ENCODE measurements at regions of chr19 and their contacts with region 1.

Region 1: DNA sequence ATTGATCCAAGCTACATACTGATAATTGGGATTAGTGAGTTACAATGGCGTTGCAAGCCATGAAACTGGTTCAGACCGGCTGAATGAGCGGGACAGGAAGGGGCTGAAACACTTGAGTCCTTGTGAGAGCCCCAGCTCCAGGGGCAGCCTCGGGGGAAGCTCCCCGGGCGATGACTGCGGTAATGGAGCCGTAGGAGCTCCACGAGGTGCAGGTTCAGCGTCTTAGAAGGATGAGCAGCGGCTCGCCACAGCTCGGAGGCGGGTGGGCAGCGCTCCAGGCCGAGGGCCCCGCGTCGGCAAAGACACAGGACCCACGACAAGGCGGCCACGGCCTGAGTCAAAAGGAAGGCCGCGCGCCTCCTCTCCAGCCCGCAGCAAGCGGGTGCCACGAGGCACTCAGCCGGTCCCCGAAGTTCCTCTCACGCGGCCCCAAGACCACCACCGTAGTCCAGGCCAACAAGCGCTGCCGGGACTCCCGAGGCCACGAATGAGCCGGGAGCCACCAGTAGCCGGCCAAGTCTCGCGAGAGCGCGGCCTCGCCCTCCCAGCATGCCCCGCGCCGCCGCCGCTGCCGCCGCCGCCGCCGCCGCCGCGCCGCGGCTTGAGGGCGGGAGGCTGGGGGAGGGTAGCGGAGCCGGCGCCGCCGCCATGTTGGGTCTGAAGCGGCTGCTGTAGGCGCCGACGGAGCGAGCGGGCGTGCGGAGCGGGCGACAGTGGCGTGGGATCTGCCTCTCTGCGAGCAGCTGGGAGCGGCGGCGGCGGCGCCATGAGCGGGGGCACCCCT is at the start of gene LSM14A:
- DNase-seq: peak; percentile 72
- ATAC-seq: peak; percentile 78
- H3K4me3 ChIP-seq: peak within 1 kb of the TSS; percentile 95
- H3K27ac ChIP-seq: peak within 1 kb of the TSS; percentile 81
- H3K4me1 ChIP-seq: peaks cover 30% of the 10 kb centered on the region
- H3K27me3 ChIP-seq: no peaks in the 10 kb centered on the region
- CTCF ChIP-seq: no peak
- total RNA-seq, gene LSM14A: 67.4 and 88.5 TPM in 2 replicates

Region 2: GRCh38 chr19:34120846-34121639 is 51.0 kb before region 1 on chr19:
- CTCF ChIA-PET with region 1: no interaction called
- POLR2A ChIA-PET with region 1: no interaction called
- intact Hi-C with region 1: no loop called
- DNase-seq: peak; percentile 44
- ATAC-seq: no peak
- H3K4me3 ChIP-seq: no peak overlapping the region
- H3K27ac ChIP-seq: no peak overlapping the region
- H3K4me1 ChIP-seq: no peaks in the 10 kb centered on the region
- H3K27me3 ChIP-seq: no peaks in the 10 kb centered on the region
- CTCF ChIP-seq: peak; percentile 77

Region 3: DNA sequence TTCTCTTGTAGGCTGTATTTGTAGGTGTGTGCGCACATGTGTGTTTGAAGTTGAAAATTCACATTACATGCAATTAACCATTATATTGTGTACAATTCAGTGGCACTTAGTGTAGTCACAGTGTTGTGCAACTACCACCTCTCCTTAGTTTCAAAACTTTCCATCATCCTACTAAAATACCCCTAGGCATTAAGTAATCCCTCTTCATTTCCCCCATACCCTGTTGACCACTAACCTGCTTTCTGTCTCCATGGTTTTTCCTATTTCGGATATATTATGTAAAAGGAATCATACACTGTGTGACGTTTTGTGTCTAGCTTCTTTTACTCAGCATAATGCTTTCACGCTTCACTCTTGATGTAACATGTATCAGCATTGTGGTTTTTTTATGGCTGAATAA is 16.3 kb after region 1 on chr19:
- CTCF ChIA-PET with region 1: no interaction called
- POLR2A ChIA-PET with region 1: no interaction called
- intact Hi-C with region 1: loop called (anchors 2 kb)
- DNase-seq: no peak
- ATAC-seq: no peak
- H3K4me3 ChIP-seq: no peak overlapping the region
- H3K27ac ChIP-seq: no peak overlapping the region
- H3K4me1 ChIP-seq: no peaks in the 10 kb centered on the region
- H3K27me3 ChIP-seq: no peaks in the 10 kb centered on the region
- CTCF ChIP-seq: no peak

Measured in PC-3 (cell line).